Lower lobe of right lung (tissue), 2 donors: ENCODE measurements at regions of chr20 and their contacts with region 1.

Region 1: GRCh38 chr20:59782986-59783640 is 150.3 kb downstream of the SYCP2 start:
- DNase-seq: no peak
- ATAC-seq: peak; percentile 59 to 61
- H3K4me3 ChIP-seq: no peak overlapping the region
- H3K27ac ChIP-seq: no peak overlapping the region
- H3K4me1 ChIP-seq: no peaks in the 10 kb centered on the region
- H3K27me3 ChIP-seq: peaks cover 7% of the 10 kb centered on the region
- CTCF ChIP-seq: peak; percentile 77

Region 2: DNA sequence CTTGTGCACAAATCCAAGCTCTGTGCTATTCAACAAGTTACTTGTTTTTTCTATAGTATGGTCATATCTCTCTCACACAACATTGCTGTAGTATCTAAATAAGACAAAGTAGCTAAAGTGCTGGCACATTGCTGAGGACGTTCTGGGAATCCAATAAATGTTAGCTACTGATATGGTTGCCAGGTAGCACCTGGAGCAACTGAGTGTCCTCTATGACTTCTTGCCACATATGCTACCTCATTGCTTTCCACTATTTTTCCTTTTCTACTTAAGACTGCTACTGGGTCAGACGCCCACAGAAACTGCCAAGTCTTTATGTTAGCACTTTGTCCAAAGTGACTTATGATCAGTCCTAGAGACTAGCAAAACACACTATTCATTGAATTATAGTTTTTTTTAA is 65.1 kb after region 1 on chr20:
- intact Hi-C with region 1: loop called (anchors 10 kb)
- DNase-seq: no peak
- ATAC-seq: peak in 1 of 2 donors; percentile 55
- H3K4me3 ChIP-seq: no peak overlapping the region
- H3K27ac ChIP-seq: no peak overlapping the region
- H3K4me1 ChIP-seq: no peaks in the 10 kb centered on the region
- H3K27me3 ChIP-seq: no peaks in the 10 kb centered on the region
- CTCF ChIP-seq: no peak

Region 3: GRCh38 chr20:60137629-60138245 is 354.6 kb after region 1 on chr20:
- intact Hi-C with region 1: no loop called
- DNase-seq: no peak
- ATAC-seq: peak; percentile 71 to 83
- H3K4me3 ChIP-seq: peak overlapping the region; percentile 34
- H3K27ac ChIP-seq: no peak overlapping the region
- H3K4me1 ChIP-seq: peaks cover 8% of the 10 kb centered on the region
- H3K27me3 ChIP-seq: no peaks in the 10 kb centered on the region
- CTCF ChIP-seq: peak; percentile 47